CD8-positive, alpha-beta T cell (primary cell): ENCODE measurements at regions of chr1 and their contacts with region 1.

Region 1: DNA sequence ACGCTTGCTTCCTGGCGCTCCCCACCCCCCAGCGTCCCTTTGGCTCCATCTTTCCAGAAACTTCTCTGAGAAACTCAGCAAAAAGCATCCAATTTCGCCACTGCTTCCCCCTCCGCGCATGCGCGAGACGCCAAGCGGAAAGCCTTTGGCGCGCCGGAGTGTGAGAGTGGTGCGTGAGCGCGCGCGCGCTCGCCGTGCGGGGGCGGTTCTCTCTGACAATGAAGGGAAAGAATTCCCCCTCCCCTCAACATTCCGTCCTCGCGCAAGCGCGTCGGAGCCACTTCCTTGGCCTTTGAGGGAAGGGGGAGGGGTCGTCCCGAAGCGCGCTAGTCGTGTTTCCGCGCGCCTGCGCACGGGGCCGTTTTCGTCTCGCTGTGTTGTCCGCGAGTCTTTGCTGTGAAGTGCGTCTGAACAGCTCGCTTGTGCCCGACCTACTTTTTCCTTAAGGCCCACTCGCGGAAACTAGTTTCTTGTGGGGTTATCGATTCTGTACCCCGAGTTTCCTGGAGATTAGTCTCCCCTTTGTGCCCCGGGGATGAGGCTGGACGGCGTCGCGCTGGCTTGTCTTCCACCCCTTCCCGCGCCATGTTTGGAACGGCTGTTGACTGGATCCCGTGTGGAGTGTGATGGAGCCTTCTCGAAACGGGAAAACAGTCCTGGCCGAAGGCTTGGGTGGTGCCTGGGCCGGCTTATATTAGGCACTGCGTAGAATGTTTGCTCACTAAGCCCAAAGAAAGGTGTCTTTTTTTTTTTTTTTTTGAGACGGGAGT is 11.6 kb upstream of the SPEN start:
- DNase-seq: peak; percentile 96 to 100 (median 99)
- ATAC-seq: peak; percentile 62
- H3K4me3 ChIP-seq: peak overlapping the region; percentile 83 to 84
- H3K4me3 Mint-ChIP-seq: peak overlapping the region; percentile 96
- H3K27ac ChIP-seq: peak overlapping the region; percentile 83 to 99
- H3K27ac Mint-ChIP-seq: peak overlapping the region; percentile 99
- H3K4me1 ChIP-seq: peaks cover 20% of the 10 kb centered on the region
- H3K4me1 Mint-ChIP-seq: peaks cover 23% of the 10 kb centered on the region
- H3K27me3 ChIP-seq: no peaks in the 10 kb centered on the region
- H3K27me3 Mint-ChIP-seq: no peaks in the 10 kb centered on the region
- CTCF ChIP-seq: no peak

Region 2: DNA sequence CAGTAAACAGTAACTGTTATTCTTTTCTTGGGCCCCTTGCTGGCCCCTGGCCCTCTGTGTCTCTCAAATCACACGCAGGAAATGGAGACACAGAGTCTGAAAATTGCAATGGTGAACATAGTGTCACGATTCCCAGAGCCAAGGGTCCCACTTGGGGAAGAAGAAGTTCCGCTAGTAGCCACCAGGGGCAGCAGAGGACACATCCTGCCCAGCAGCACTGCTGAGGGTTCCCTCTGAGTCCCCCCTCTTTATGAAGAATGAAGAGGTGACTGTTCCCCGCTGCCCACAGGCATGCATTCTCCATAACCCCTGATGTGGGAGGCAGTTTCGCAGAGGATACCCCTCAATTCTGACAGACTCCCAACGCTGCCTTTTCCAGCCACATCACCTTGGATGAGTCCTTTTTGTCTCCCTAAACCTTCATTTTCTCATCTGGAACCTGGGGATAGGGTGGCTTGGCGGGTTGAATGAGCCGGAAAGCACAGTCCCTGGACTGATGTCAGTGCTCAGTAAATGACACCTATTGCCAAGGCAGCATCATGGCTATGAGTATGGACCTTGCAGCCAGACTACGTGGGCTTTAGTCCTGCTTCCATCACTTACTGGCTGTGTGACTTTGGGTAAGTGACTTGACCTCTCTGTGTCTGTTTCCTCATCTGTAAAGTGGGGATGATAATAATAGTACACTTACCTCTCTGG is 920.4 kb before region 1 on chr1:
- CTCF ChIA-PET with region 1: no interaction called
- POLR2A ChIA-PET with region 1: no interaction called
- intact Hi-C with region 1: no loop called
- DNase-seq: peak in 7 of 9 experiments; percentile 14 to 56 (median 46)
- ATAC-seq: no peak
- H3K4me3 ChIP-seq: no peak overlapping the region
- H3K4me3 Mint-ChIP-seq: no peak overlapping the region
- H3K27ac ChIP-seq: no peak overlapping the region
- H3K27ac Mint-ChIP-seq: no peak overlapping the region
- H3K4me1 ChIP-seq: no peaks in the 10 kb centered on the region
- H3K4me1 Mint-ChIP-seq: no peaks in the 10 kb centered on the region
- H3K27me3 ChIP-seq: no peaks in the 10 kb centered on the region
- H3K27me3 Mint-ChIP-seq: peaks cover 6% of the 10 kb centered on the region
- CTCF ChIP-seq: peak; percentile 73

Region 3: GRCh38 chr1:15820478-15820877 is 15.4 kb before region 1 on chr1:
- CTCF ChIA-PET with region 1: interaction called, 19 read pairs
- POLR2A ChIA-PET with region 1: interaction called, 18 read pairs
- intact Hi-C with region 1: loop called in 1 of 2 experiments (anchors 1 kb)
- DNase-seq: no peak
- ATAC-seq: no peak
- H3K4me3 ChIP-seq: no peak overlapping the region
- H3K4me3 Mint-ChIP-seq: no peak overlapping the region
- H3K27ac ChIP-seq: no peak overlapping the region
- H3K27ac Mint-ChIP-seq: no peak overlapping the region
- H3K4me1 ChIP-seq: no peaks in the 10 kb centered on the region
- H3K4me1 Mint-ChIP-seq: peaks cover 3% of the 10 kb centered on the region
- H3K27me3 ChIP-seq: no peaks in the 10 kb centered on the region
- H3K27me3 Mint-ChIP-seq: no peaks in the 10 kb centered on the region
- CTCF ChIP-seq: no peak

Region 4: GRCh38 chr1:15847100-15847892 is 11.4 kb after region 1 on chr1 and contains the start of gene SPEN:
- CTCF ChIA-PET with region 1: interaction called, 9 read pairs
- POLR2A ChIA-PET with region 1: interaction called, 235 read pairs
- intact Hi-C with region 1: loop called (anchors 1 kb)
- DNase-seq: peak; percentile 95 to 99 (median 99)
- ATAC-seq: peak; percentile 80
- H3K4me3 ChIP-seq: peak within 1 kb of the TSS; percentile 96 to 99
- H3K4me3 Mint-ChIP-seq: peak within 1 kb of the TSS; percentile 98
- H3K27ac ChIP-seq: peak within 1 kb of the TSS; percentile 91 to 93
- H3K27ac Mint-ChIP-seq: peak within 1 kb of the TSS; percentile 97
- H3K4me1 ChIP-seq: peaks cover 24% of the 10 kb centered on the region
- H3K4me1 Mint-ChIP-seq: peaks cover 36% of the 10 kb centered on the region
- H3K27me3 ChIP-seq: no peaks in the 10 kb centered on the region
- H3K27me3 Mint-ChIP-seq: no peaks in the 10 kb centered on the region
- CTCF ChIP-seq: no peak
- total RNA-seq, gene SPEN: 85.9 to 87.3 TPM

Region 5: GRCh38 chr1:15975805-15976680 is 140.1 kb after region 1 on chr1 and contains the start of gene ZBTB17:
- CTCF ChIA-PET with region 1: interaction called, 4 read pairs
- POLR2A ChIA-PET with region 1: interaction called, 23 read pairs
- intact Hi-C with region 1: loop called (anchors 1 to 5 kb)
- DNase-seq: peak; percentile 90 to 98 (median 95)
- ATAC-seq: peak; percentile 88
- H3K4me3 ChIP-seq: peak within 1 kb of the TSS; percentile 89 to 93
- H3K4me3 Mint-ChIP-seq: peak within 1 kb of the TSS; percentile 90
- H3K27ac ChIP-seq: peak within 1 kb of the TSS; percentile 68 to 87
- H3K27ac Mint-ChIP-seq: peak within 1 kb of the TSS; percentile 94
- H3K4me1 ChIP-seq: peaks cover 11% of the 10 kb centered on the region
- H3K4me1 Mint-ChIP-seq: peaks cover 38% of the 10 kb centered on the region
- H3K27me3 ChIP-seq: no peaks in the 10 kb centered on the region
- H3K27me3 Mint-ChIP-seq: no peaks in the 10 kb centered on the region
- CTCF ChIP-seq: no peak
- total RNA-seq, gene ZBTB17: 106 to 115 TPM

Region 6: GRCh38 chr1:16904560-16905111 is 1068.7 kb after region 1 on chr1:
- CTCF ChIA-PET with region 1: no interaction called
- POLR2A ChIA-PET with region 1: no interaction called
- intact Hi-C with region 1: loop called in 1 of 2 experiments (anchors 10 kb)
- DNase-seq: peak; percentile 97 to 100 (median 99)
- ATAC-seq: peak; percentile 95
- H3K4me3 ChIP-seq: peak overlapping the region; percentile 50
- H3K4me3 Mint-ChIP-seq: no peak overlapping the region
- H3K27ac ChIP-seq: peak overlapping the region; percentile 97 to 99
- H3K27ac Mint-ChIP-seq: no peak overlapping the region
- H3K4me1 ChIP-seq: peaks cover 44% of the 10 kb centered on the region
- H3K4me1 Mint-ChIP-seq: peaks cover 32% of the 10 kb centered on the region
- H3K27me3 ChIP-seq: no peaks in the 10 kb centered on the region
- H3K27me3 Mint-ChIP-seq: no peaks in the 10 kb centered on the region
- CTCF ChIP-seq: no peak